Activated CD4-positive, alpha-beta T cell treated with anti-CD3 and anti-CD28 coated beads for 36 hours (primary cell): ENCODE measurements at regions of chr1 and their contacts with region 1.

Region 1: GRCh38 chr1:208071435-208072031 is 160.6 kb upstream of the CD34 start:
- DNase-seq: no peak
- ATAC-seq: no peak
- H3K4me3 Mint-ChIP-seq: no peak overlapping the region
- H3K27ac Mint-ChIP-seq: no peak overlapping the region
- H3K4me1 Mint-ChIP-seq: no peaks in the 10 kb centered on the region
- H3K27me3 Mint-ChIP-seq: no peaks in the 10 kb centered on the region

Region 2: GRCh38 chr1:208093754-208094719 is 22.5 kb after region 1 on chr1:
- CTCF ChIA-PET with region 1: interaction called, 6 read pairs
- POLR2A ChIA-PET with region 1: no interaction called
- intact Hi-C with region 1: loop called in 1 of 2 experiments (anchors 2 kb)
- DNase-seq: peak; percentile 83
- ATAC-seq: peak; percentile 64
- H3K4me3 Mint-ChIP-seq: no peak overlapping the region
- H3K27ac Mint-ChIP-seq: no peak overlapping the region
- H3K4me1 Mint-ChIP-seq: no peaks in the 10 kb centered on the region
- H3K27me3 Mint-ChIP-seq: no peaks in the 10 kb centered on the region